ENCODE measurements at regions of chr12 and their contacts with region 1.

Region 1: GRCh38 chr12:81257947-81258551 is 180.2 kb downstream of the ACSS3 start:
- DNase-seq: peak; percentile 30
- H3K4me3 Mint-ChIP-seq: no peak overlapping the region
- H3K27ac Mint-ChIP-seq: no peak overlapping the region
- H3K4me1 Mint-ChIP-seq: no peaks in the 10 kb centered on the region
- H3K27me3 Mint-ChIP-seq: no peaks in the 10 kb centered on the region
- CTCF ChIP-seq: peak; percentile 19

Region 2: GRCh38 chr12:80412369-80412953 is 845.6 kb before region 1 on chr12:
- CTCF ChIA-PET with region 1: no interaction called
- intact Hi-C with region 1: loop called (anchors 1 kb)
- DNase-seq: peak; percentile 23
- H3K4me3 Mint-ChIP-seq: no peak overlapping the region
- H3K27ac Mint-ChIP-seq: no peak overlapping the region
- H3K4me1 Mint-ChIP-seq: no peaks in the 10 kb centered on the region
- H3K27me3 Mint-ChIP-seq: no peaks in the 10 kb centered on the region
- CTCF ChIP-seq: peak; percentile 63

Region 3: GRCh38 chr12:80598004-80598606 is 659.9 kb before region 1 on chr12:
- CTCF ChIA-PET with region 1: no interaction called
- intact Hi-C with region 1: loop called (anchors 5 kb)
- DNase-seq: peak; percentile 56
- H3K4me3 Mint-ChIP-seq: no peak overlapping the region
- H3K27ac Mint-ChIP-seq: no peak overlapping the region
- H3K4me1 Mint-ChIP-seq: no peaks in the 10 kb centered on the region
- H3K27me3 Mint-ChIP-seq: no peaks in the 10 kb centered on the region
- CTCF ChIP-seq: peak; percentile 26

Region 4: DNA sequence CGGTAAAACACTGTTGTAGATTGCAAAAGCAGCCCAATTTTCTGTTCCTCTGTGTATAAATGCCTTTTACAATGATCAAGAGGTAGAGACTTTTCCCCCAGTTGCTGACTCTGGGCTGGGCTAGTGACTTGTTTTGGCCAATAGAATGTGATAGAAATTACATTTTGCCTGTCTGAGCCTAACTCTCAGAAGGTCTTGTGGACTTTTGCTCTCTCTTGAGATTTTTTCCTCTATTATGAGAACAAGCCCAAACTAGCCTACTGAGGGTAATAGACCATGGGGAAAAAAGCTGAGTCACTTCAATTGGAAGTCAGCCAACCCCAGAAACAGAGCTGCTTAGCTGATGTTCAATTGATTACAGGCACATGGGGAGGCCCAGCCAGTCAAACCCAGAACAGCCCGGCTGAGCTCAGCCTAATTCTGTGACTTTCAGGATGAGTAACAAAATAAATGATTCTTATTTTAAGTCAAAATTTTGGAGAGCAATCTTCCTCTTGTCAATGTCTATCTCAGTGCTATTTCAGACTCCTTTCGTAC is 480.0 kb before region 1 on chr12:
- CTCF ChIA-PET with region 1: no interaction called
- intact Hi-C with region 1: loop called (anchors 5 kb)
- DNase-seq: peak; percentile 71
- H3K4me3 Mint-ChIP-seq: no peak overlapping the region
- H3K27ac Mint-ChIP-seq: peak overlapping the region; percentile 40
- H3K4me1 Mint-ChIP-seq: peaks cover 18% of the 10 kb centered on the region
- H3K27me3 Mint-ChIP-seq: no peaks in the 10 kb centered on the region
- CTCF ChIP-seq: no peak

Region 5: GRCh38 chr12:80936498-80937390 is 321.3 kb before region 1 on chr12:
- CTCF ChIA-PET with region 1: no interaction called
- intact Hi-C with region 1: loop called (anchors 5 kb)
- DNase-seq: peak; percentile 60
- H3K4me3 Mint-ChIP-seq: peak overlapping the region; percentile 88
- H3K27ac Mint-ChIP-seq: peak overlapping the region; percentile 56
- H3K4me1 Mint-ChIP-seq: peaks cover 2% of the 10 kb centered on the region
- H3K27me3 Mint-ChIP-seq: no peaks in the 10 kb centered on the region
- CTCF ChIP-seq: no peak

Region 6: GRCh38 chr12:81128930-81129554 is 129.0 kb before region 1 on chr12:
- CTCF ChIA-PET with region 1: interaction called, 4 read pairs
- intact Hi-C with region 1: loop called (anchors 5 kb)
- DNase-seq: peak; percentile 34
- H3K4me3 Mint-ChIP-seq: no peak overlapping the region
- H3K27ac Mint-ChIP-seq: no peak overlapping the region
- H3K4me1 Mint-ChIP-seq: no peaks in the 10 kb centered on the region
- H3K27me3 Mint-ChIP-seq: no peaks in the 10 kb centered on the region
- CTCF ChIP-seq: peak; percentile 52

Measured in Calu3 (cell line).